WTC11 (cell line): ENCODE measurements at regions of chr3 and their contacts with region 1.

Region 1: GRCh38 chr3:13657660-13658435 is 108.9 kb downstream of the FBLN2 start:
- DNase-seq: peak; percentile 76
- ATAC-seq: peak; percentile 67
- H3K4me3 Mint-ChIP-seq: peak overlapping the region; percentile 42; the same call in 1 of the 2 replicates
- H3K27ac Mint-ChIP-seq: no peak overlapping the region
- H3K4me1 Mint-ChIP-seq: peaks cover 10% of the 10 kb centered on the region
- H3K27me3 Mint-ChIP-seq: peaks cover 43% of the 10 kb centered on the region
- CTCF ChIP-seq: peak; percentile 73

Region 2: DNA sequence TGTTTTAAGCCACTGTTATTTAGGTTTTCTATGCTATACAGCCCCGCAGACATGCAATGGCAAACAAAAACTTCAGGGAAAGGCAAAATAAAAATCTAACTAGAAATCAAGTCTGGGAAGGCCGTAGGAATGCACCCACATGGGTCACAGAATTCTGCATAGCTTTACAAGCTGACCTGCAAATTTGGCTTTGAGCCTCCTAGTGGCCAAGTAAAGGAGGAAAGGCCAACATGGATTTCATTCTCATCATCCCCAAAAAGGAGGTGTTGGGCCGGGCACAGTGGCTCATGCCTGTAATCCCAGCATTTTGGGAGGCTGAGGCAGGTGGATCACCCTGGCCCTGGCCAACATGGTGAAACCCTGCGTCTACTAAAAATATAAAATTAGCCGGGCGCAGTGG is 15.4 kb after region 1 on chr3:
- CTCF ChIA-PET with region 1: interaction called, 24 read pairs
- POLR2A ChIA-PET with region 1: no interaction called
- DNase-seq: no peak
- ATAC-seq: peak; percentile 73
- H3K4me3 Mint-ChIP-seq: no peak overlapping the region
- H3K27ac Mint-ChIP-seq: no peak overlapping the region
- H3K4me1 Mint-ChIP-seq: no peaks in the 10 kb centered on the region
- H3K27me3 Mint-ChIP-seq: peaks cover 4% of the 10 kb centered on the region
- CTCF ChIP-seq: peak; percentile 27; the same call in 1 of the 2 replicates

Region 3: GRCh38 chr3:13700362-13700761 is 42.5 kb after region 1 on chr3:
- CTCF ChIA-PET with region 1: interaction called, 16 read pairs
- POLR2A ChIA-PET with region 1: no interaction called
- DNase-seq: peak; percentile 54
- ATAC-seq: peak; percentile 83
- H3K4me3 Mint-ChIP-seq: no peak overlapping the region
- H3K27ac Mint-ChIP-seq: no peak overlapping the region
- H3K4me1 Mint-ChIP-seq: peaks cover 28% of the 10 kb centered on the region
- H3K27me3 Mint-ChIP-seq: peaks cover 10% of the 10 kb centered on the region
- CTCF ChIP-seq: no peak

Region 4: DNA sequence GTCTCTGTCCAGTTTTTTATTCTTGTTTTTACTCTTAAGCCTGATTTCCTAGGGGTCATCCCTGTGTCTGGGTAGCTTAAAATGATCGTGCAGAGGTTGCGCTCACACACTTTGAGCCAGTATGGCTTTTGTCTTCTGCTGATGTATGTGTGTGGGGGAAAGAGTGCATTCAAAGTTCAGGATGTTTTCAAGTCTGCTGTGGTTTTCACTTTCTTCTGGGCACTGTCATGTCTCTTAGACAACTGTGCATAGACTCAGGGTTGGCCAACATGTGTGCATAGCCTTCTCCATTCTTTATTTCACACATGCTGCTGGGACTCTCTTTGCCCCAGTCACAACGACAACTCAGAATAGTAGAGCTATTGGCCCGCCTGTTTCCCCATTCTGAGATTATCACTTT is 82.9 kb after region 1 on chr3:
- CTCF ChIA-PET with region 1: no interaction called
- POLR2A ChIA-PET with region 1: no interaction called
- DNase-seq: no peak
- ATAC-seq: no peak
- H3K4me3 Mint-ChIP-seq: no peak overlapping the region
- H3K27ac Mint-ChIP-seq: no peak overlapping the region
- H3K4me1 Mint-ChIP-seq: no peaks in the 10 kb centered on the region
- H3K27me3 Mint-ChIP-seq: peaks cover 3% of the 10 kb centered on the region; the same call in 1 of the 2 replicates
- CTCF ChIP-seq: no peak

Region 5: GRCh38 chr3:13770170-13771169 is 112.6 kb after region 1 on chr3:
- CTCF ChIA-PET with region 1: interaction called, 14 read pairs
- POLR2A ChIA-PET with region 1: no interaction called
- DNase-seq: no peak
- ATAC-seq: peak; percentile 77
- H3K4me3 Mint-ChIP-seq: no peak overlapping the region
- H3K27ac Mint-ChIP-seq: no peak overlapping the region
- H3K4me1 Mint-ChIP-seq: peaks cover 18% of the 10 kb centered on the region
- H3K27me3 Mint-ChIP-seq: no peaks in the 10 kb centered on the region
- CTCF ChIP-seq: no peak

Region 6: GRCh38 chr3:13782501-13782900 is 124.7 kb after region 1 on chr3:
- CTCF ChIA-PET with region 1: interaction called, 15 read pairs
- POLR2A ChIA-PET with region 1: no interaction called
- DNase-seq: no peak
- ATAC-seq: no peak
- H3K4me3 Mint-ChIP-seq: no peak overlapping the region
- H3K27ac Mint-ChIP-seq: peak overlapping the region; percentile 26; the same call in 1 of the 2 replicates
- H3K4me1 Mint-ChIP-seq: peaks cover 18% of the 10 kb centered on the region
- H3K27me3 Mint-ChIP-seq: no peaks in the 10 kb centered on the region
- CTCF ChIP-seq: no peak

Region 7: DNA sequence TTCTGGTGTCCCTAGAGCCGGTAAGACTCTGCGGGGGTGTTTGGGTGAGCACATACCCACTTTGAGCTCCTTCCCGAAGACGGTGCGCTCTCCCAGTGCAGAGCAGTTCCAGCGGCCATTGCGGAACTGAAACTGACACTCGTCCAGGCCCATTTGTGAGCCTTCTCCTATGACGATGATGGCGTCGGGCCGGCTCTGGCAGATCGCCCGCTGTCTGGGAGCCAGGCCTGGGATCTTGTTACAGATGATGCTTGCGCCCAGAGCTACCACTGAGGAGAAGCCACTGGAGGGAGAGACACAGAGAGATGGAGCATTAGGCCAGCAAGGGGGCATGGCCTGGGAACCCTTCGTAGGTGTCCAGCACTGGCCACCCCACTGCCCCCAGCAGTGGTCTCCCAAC is 217.0 kb after region 1 on chr3:
- CTCF ChIA-PET with region 1: interaction called, 103 read pairs
- POLR2A ChIA-PET with region 1: interaction called, 3 read pairs
- DNase-seq: no peak
- ATAC-seq: no peak
- H3K4me3 Mint-ChIP-seq: no peak overlapping the region
- H3K27ac Mint-ChIP-seq: no peak overlapping the region
- H3K4me1 Mint-ChIP-seq: peaks cover 21% of the 10 kb centered on the region
- H3K27me3 Mint-ChIP-seq: peaks cover 80% of the 10 kb centered on the region
- CTCF ChIP-seq: no peak

Region 8: DNA sequence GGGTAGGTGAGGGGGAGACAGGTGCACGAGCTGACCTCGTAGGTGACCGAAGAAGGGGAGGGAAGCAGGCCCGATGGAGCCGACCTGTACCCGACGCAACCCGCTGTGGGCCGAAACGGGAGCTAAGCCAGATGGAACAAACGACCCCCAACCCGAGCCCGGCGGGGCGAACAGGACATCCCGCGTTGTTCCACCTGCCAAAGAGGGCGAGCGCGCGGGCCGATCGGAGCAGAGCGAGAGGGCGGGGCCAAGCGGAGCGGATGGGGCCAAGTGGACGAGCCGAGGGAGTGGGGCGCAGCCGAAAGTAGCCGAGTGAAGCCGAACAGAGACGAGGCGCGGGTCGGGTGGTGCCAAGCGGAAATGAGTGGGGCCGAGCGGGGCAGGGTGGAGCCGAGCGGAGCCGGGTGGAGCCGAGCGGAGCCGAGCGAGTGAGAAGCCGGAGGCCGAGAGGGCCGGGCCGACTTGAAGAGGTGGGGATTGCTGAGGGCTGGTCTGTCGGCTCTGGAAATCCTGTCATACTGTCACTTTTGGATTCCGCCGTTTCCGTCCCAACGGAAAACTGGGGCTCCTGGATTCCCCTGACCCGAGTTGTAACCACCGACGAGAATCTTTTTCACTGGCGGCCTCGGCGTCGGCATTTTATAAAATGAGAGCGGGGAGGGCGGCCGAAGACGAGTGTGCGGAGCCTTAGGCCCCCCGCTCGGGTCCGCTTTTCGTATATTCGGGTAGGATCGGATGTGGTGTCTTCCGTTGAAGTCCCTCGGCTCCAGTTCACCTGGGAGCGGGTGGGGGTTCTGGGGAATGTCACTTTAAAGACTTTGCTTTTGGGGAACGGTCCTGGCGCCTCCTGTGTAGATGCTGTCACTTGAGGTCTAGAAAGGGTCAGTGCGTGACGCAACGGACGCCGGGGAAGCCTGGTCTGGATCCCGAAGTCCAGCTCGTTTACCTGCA is 237.6 kb after region 1 on chr3:
- CTCF ChIA-PET with region 1: interaction called, 27 read pairs
- POLR2A ChIA-PET with region 1: no interaction called
- DNase-seq: peak; percentile 98
- ATAC-seq: peak; percentile 99
- H3K4me3 Mint-ChIP-seq: peak overlapping the region; percentile 89
- H3K27ac Mint-ChIP-seq: no peak overlapping the region
- H3K4me1 Mint-ChIP-seq: peaks cover 13% of the 10 kb centered on the region
- H3K27me3 Mint-ChIP-seq: peaks cover 32% of the 10 kb centered on the region
- CTCF ChIP-seq: no peak